T-cell (primary cell): ENCODE measurements at regions of chr4 and their contacts with region 1.

Region 1: GRCh38 chr4:142353149-142353738 is 492.9 kb downstream of the INPP4B start:
- DNase-seq: peak in 5 of 35 experiments; percentile 2 to 72 (median 21)
- ATAC-seq: peak in 2 of 4 experiments; percentile 24 to 34
- H3K4me3 ChIP-seq: no peak overlapping the region
- H3K4me3 Mint-ChIP-seq: peak overlapping the region; percentile 37 to 74 (median 62)
- H3K27ac ChIP-seq: peak overlapping the region; percentile 36
- H3K27ac Mint-ChIP-seq: peak overlapping the region; percentile 92 to 97
- H3K4me1 ChIP-seq: peaks cover 35 to 37% of the 10 kb centered on the region in 2 experiments
- H3K4me1 Mint-ChIP-seq: peaks cover 95 to 96% (median 96%) of the 10 kb centered on the region in 3 donors
- H3K27me3 ChIP-seq: no peaks in the 10 kb centered on the region
- H3K27me3 Mint-ChIP-seq: no peaks in the 10 kb centered on the region

Region 2: GRCh38 chr4:140427106-140427961 is 1925.9 kb before region 1 on chr4 and contains the start of gene CLGN:
- CTCF ChIA-PET with region 1: interaction called in 1 of 2 experiments, 16 read pairs
- POLR2A ChIA-PET with region 1: no interaction called
- DNase-seq: peak in 30 of 35 experiments; percentile 1 to 42 (median 16)
- ATAC-seq: peak; percentile 72 to 78 (median 77)
- H3K4me3 ChIP-seq: peak within 1 kb of the TSS; percentile 47 to 88
- H3K4me3 Mint-ChIP-seq: peak within 1 kb of the TSS; percentile 71 to 82 (median 74)
- H3K27ac ChIP-seq: no peak within 1 kb of the TSS
- H3K27ac Mint-ChIP-seq: peak within 1 kb of the TSS in 1 of 2 donors; percentile 45
- H3K4me1 ChIP-seq: peaks cover 2 to 11% of the 10 kb centered on the region in 2 experiments
- H3K4me1 Mint-ChIP-seq: peaks cover 11 to 13% (median 11%) of the 10 kb centered on the region in 3 donors
- H3K27me3 ChIP-seq: peaks cover 0 to 25% of the 10 kb centered on the region in 2 experiments
- H3K27me3 Mint-ChIP-seq: peaks cover 50 to 54% of the 10 kb centered on the region in 2 donors
- total RNA-seq, gene CLGN: 0.38 TPM in 1 of 5 donors, not detected in the others

Region 3: DNA sequence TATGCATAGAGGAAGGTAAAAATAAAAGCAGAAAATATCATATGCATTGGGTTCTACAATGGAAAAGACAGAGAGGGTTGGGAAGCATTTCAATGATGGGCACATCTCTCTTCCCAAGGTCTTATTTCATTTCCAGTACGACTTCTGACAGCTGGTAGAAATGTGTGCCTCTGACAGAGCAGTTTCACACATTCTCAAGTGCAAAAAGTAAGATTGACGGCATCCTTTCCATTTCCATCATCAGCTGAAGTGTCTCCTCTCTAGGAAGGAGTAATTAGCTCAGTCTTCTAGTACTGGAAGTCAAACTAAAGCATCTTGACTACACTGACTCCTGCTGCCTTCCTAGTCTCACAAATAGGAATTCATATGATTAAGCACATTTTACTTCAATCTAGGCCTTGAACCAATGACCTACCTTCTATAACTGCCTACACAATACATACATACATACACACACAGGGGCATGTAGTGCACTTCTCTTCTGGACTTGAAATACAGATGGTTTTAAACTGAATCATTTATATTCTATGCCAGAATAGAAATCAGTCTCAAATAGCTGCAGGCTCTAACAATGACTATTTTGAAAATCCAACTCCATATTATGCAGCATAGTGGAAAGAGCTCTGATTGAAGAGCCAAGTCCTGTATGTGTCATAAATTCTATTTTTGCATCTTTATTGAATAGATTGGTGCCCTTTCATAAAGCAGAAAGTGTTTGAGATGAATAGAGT is 19.5 kb after region 1 on chr4:
- CTCF ChIA-PET with region 1: interaction called, 4 to 11 read pairs
- POLR2A ChIA-PET with region 1: interaction called in 1 of 2 experiments, 3 read pairs
- DNase-seq: no peak
- ATAC-seq: no peak
- H3K4me3 ChIP-seq: no peak overlapping the region
- H3K4me3 Mint-ChIP-seq: peak overlapping the region in 2 of 3 donors; percentile 41 to 44
- H3K27ac ChIP-seq: no peak overlapping the region
- H3K27ac Mint-ChIP-seq: peak overlapping the region; percentile 72 to 78
- H3K4me1 ChIP-seq: peaks cover 10 to 17% of the 10 kb centered on the region in 2 experiments
- H3K4me1 Mint-ChIP-seq: peaks cover 72 to 88% (median 82%) of the 10 kb centered on the region in 3 donors
- H3K27me3 ChIP-seq: no peaks in the 10 kb centered on the region
- H3K27me3 Mint-ChIP-seq: no peaks in the 10 kb centered on the region

Region 4: GRCh38 chr4:142416711-142417275 is 63.5 kb after region 1 on chr4:
- CTCF ChIA-PET with region 1: interaction called in 1 of 2 experiments, 15 read pairs
- POLR2A ChIA-PET with region 1: interaction called in 1 of 2 experiments, 3 read pairs
- DNase-seq: peak in 3 of 35 experiments; percentile 7 to 59 (median 10)
- ATAC-seq: peak; percentile 92 to 96 (median 94)
- H3K4me3 ChIP-seq: peak overlapping the region in 1 of 2 donors; percentile 31
- H3K4me3 Mint-ChIP-seq: peak overlapping the region; percentile 59 to 81 (median 74)
- H3K27ac ChIP-seq: peak overlapping the region; percentile 93
- H3K27ac Mint-ChIP-seq: peak overlapping the region; percentile 97 to 99
- H3K4me1 ChIP-seq: peaks cover 9 to 16% of the 10 kb centered on the region in 2 experiments
- H3K4me1 Mint-ChIP-seq: peaks cover 45 to 52% (median 49%) of the 10 kb centered on the region in 3 donors
- H3K27me3 ChIP-seq: no peaks in the 10 kb centered on the region
- H3K27me3 Mint-ChIP-seq: no peaks in the 10 kb centered on the region

Region 5: GRCh38 chr4:142719854-142720541 is 366.8 kb after region 1 on chr4:
- CTCF ChIA-PET with region 1: interaction called, 5 to 20 read pairs
- POLR2A ChIA-PET with region 1: interaction called in 1 of 2 experiments, 4 read pairs
- DNase-seq: peak in 2 of 35 experiments; percentile 3 to 65
- ATAC-seq: peak; percentile 62 to 79 (median 72)
- H3K4me3 ChIP-seq: no peak overlapping the region
- H3K4me3 Mint-ChIP-seq: no peak overlapping the region
- H3K27ac ChIP-seq: no peak overlapping the region
- H3K27ac Mint-ChIP-seq: peak overlapping the region; percentile 58 to 73
- H3K4me1 ChIP-seq: peaks cover 0 to 5% of the 10 kb centered on the region in 2 experiments
- H3K4me1 Mint-ChIP-seq: peaks cover 20 to 39% (median 37%) of the 10 kb centered on the region in 3 donors
- H3K27me3 ChIP-seq: no peaks in the 10 kb centered on the region
- H3K27me3 Mint-ChIP-seq: no peaks in the 10 kb centered on the region